Caco-2 (cell line): ENCODE measurements at regions of chr4 and their contacts with region 1.

Region 1: DNA sequence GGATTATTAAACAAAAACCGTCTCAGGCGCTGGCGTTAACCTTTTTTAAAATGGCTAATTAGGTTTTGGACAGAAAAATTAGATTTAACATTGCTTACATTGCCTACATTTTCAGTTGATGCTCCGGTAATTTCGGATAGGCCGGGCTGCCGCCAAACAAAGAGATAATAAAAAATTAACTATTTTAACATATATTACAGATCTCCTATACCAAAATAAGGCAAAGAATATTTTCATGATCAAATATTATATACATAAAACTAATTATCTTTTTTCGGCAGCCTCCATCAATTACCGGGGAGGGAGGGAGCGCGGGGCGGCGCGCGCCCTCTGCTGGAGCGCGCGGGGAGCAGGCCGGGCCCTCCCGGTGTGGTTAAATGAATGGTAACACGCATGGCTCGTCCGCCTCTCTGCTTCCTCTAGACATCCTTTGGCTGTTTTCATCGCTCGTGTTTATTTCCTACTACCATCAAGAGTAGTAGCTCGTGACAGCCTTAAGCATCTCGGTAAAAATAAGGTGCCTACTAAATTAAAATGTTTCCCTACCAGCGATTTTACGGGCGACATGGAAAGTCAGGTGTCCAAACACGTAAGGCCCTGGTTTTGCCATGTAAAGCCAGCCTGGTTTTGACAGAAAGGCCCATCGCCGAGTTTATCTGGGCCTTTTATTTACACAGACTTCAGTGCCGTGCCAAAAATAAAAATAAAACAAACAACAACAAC is 52.4 kb upstream of the TMEM33 start:
- DNase-seq: peak in 1 of 2 experiments; percentile 38
- H3K4me3 ChIP-seq: no peak overlapping the region
- H3K4me3 Mint-ChIP-seq: no peak overlapping the region
- H3K27ac Mint-ChIP-seq: no peak overlapping the region
- H3K4me1 ChIP-seq: no peaks in the 10 kb centered on the region
- H3K4me1 Mint-ChIP-seq: no peaks in the 10 kb centered on the region
- H3K27me3 ChIP-seq: no peaks in the 10 kb centered on the region; the same call in 1 of the 2 replicates
- H3K27me3 Mint-ChIP-seq: no peaks in the 10 kb centered on the region
- CTCF ChIP-seq: peak; percentile 79 to 84

Region 2: DNA sequence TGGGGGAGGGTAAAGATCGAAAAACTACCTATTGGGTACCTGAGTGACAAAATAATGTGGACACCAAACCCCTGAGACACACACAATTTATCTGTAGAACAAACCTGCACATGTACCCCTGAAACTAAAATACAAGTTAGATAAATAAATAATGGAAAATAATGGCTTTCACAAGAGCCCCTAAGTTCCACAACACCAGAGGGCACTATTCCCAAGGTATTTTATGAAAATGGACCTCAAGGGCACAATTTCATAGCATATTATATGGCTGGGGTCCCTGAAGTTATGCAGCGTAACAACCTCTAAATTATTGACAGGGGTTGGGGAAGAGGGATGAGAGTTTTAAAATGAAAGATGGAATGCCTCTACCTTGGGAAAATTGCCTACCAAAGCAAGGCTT is 28.8 kb before region 1 on chr4:
- CTCF ChIA-PET with region 1: no interaction called
- POLR2A ChIA-PET with region 1: no interaction called
- intact Hi-C with region 1: loop called (anchors 2 kb)
- DNase-seq: no peak
- H3K4me3 ChIP-seq: no peak overlapping the region
- H3K4me3 Mint-ChIP-seq: no peak overlapping the region
- H3K27ac Mint-ChIP-seq: no peak overlapping the region
- H3K4me1 ChIP-seq: no peaks in the 10 kb centered on the region
- H3K4me1 Mint-ChIP-seq: no peaks in the 10 kb centered on the region
- H3K27me3 ChIP-seq: no peaks in the 10 kb centered on the region
- H3K27me3 Mint-ChIP-seq: peaks cover 7% of the 10 kb centered on the region
- CTCF ChIP-seq: peak in 1 of 2 experiments; percentile 9

Region 3: GRCh38 chr4:41934815-41935651 is 52.2 kb after region 1 on chr4 and contains the start of gene TMEM33:
- CTCF ChIA-PET with region 1: no interaction called
- POLR2A ChIA-PET with region 1: no interaction called
- intact Hi-C with region 1: no loop called
- DNase-seq: peak; percentile 89 to 93
- H3K4me3 ChIP-seq: peak within 1 kb of the TSS; percentile 96
- H3K4me3 Mint-ChIP-seq: peak within 1 kb of the TSS; percentile 99
- H3K27ac Mint-ChIP-seq: peak within 1 kb of the TSS; percentile 96
- H3K4me1 ChIP-seq: peaks cover 11% of the 10 kb centered on the region
- H3K4me1 Mint-ChIP-seq: peaks cover 20% of the 10 kb centered on the region
- H3K27me3 ChIP-seq: no peaks in the 10 kb centered on the region
- H3K27me3 Mint-ChIP-seq: no peaks in the 10 kb centered on the region
- CTCF ChIP-seq: no peak
- total RNA-seq, gene TMEM33: 66.2 and 78.0 TPM in 2 replicates